ENCODE measurements at regions of chr1 and their contacts with region 1.

Region 1: DNA sequence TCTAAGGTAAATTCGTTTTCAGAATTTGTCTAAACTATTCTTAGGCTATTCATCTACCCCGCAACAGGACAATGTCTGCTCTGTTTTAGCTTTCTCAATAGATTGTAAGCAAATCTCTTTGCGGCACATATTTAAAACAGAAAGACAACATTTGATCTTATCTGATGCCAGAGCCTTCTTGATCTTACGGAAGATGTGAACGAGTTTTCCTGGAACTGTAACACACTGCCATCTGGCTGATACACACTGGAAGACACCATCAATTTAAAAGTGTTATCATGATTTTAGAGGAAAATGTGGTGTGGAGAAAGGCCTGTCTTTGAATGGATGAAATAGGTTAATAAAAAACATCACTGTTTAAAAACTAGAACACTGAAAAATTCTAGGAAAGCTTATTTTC is 36.1 kb downstream of the COA6 start:
- DNase-seq: peak; percentile 47
- H3K4me3 Mint-ChIP-seq: peak overlapping the region; percentile 61
- H3K27ac Mint-ChIP-seq: peak overlapping the region; percentile 95
- H3K4me1 Mint-ChIP-seq: peaks cover 42% of the 10 kb centered on the region
- H3K27me3 Mint-ChIP-seq: no peaks in the 10 kb centered on the region

Region 2: DNA sequence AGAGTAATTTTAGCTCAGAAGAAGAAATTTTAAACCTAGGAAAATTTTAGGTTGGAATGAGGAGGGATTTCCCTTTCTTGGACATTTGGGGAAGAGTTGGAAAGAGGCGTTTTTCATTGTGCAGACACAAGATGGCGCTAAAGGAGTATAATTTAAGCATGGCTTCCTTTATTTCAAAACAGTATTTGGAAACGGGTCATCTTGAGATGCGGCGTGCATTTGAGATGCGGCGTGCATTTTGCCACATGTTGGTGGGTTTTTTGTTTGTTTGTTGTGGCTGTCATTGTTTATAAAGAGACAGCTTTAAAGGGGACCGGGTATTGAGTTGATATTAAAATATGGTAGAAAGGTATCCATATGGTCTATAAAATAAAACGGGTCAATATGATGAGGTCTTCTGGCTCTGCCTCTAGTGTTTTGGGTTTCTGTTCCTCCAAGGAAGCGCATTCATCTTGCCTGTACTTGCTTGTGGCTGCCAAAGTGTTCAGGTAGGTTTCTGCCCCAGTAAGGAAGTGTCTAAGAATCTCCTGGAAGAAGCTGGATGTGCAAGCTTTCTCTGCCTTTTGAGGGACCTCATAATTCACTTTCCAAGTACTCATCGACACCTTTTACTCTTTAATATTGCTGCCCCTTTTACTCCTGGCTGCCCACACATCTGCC is 294.6 kb before region 1 on chr1:
- CTCF ChIA-PET with region 1: no interaction called
- intact Hi-C with region 1: loop called (anchors 1 kb)
- DNase-seq: peak; percentile 43
- H3K4me3 Mint-ChIP-seq: peak overlapping the region; percentile 41
- H3K27ac Mint-ChIP-seq: no peak overlapping the region
- H3K4me1 Mint-ChIP-seq: peaks cover 6% of the 10 kb centered on the region
- H3K27me3 Mint-ChIP-seq: peaks cover 27% of the 10 kb centered on the region

Region 3: GRCh38 chr1:234271243-234271606 is 138.1 kb before region 1 on chr1:
- CTCF ChIA-PET with region 1: no interaction called
- intact Hi-C with region 1: loop called (anchors 2 kb)
- DNase-seq: peak; percentile 22
- H3K4me3 Mint-ChIP-seq: no peak overlapping the region
- H3K27ac Mint-ChIP-seq: no peak overlapping the region
- H3K4me1 Mint-ChIP-seq: peaks cover 26% of the 10 kb centered on the region
- H3K27me3 Mint-ChIP-seq: peaks cover 28% of the 10 kb centered on the region

Region 4: GRCh38 chr1:234373064-234373958 is 36.0 kb before region 1 on chr1 and contains the start of gene COA6:
- CTCF ChIA-PET with region 1: interaction called, 10 read pairs
- intact Hi-C with region 1: loop called (anchors 1 kb)
- DNase-seq: peak; percentile 90
- H3K4me3 Mint-ChIP-seq: peak within 1 kb of the TSS; percentile 96
- H3K27ac Mint-ChIP-seq: peak within 1 kb of the TSS; percentile 98
- H3K4me1 Mint-ChIP-seq: peaks cover 54% of the 10 kb centered on the region
- H3K27me3 Mint-ChIP-seq: no peaks in the 10 kb centered on the region
- total RNA-seq, gene COA6: 45.8 to 50.2 TPM

Region 5: DNA sequence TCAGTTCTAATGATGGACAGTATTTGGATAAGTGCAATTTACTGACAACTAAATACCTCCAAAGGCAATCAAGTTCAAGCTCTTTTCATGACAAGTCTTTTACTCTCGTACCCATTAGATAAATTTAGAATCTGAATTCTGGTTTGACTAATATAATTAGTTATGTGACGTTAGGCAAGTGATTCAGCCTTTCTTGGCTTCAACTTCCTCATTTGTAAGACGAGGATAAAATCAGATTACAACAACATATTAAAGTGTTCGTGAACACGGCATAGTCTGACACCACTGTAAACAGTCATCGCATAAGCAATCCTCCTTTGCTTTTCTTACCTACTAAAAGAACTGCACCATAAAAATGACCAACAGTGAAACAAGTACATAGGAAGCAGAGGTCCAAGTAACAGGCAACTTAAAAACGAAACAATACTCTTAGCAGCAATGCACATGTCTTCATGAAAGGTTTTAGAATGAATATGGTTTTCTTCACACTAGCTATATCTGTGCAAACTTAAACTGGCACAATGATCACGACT is 10.4 kb before region 1 on chr1:
- CTCF ChIA-PET with region 1: interaction called, 6 read pairs
- intact Hi-C with region 1: loop called (anchors 1 kb)
- DNase-seq: peak; percentile 23
- H3K4me3 Mint-ChIP-seq: peak overlapping the region; percentile 60
- H3K27ac Mint-ChIP-seq: peak overlapping the region; percentile 91
- H3K4me1 Mint-ChIP-seq: peaks cover 58% of the 10 kb centered on the region
- H3K27me3 Mint-ChIP-seq: no peaks in the 10 kb centered on the region

Region 6: DNA sequence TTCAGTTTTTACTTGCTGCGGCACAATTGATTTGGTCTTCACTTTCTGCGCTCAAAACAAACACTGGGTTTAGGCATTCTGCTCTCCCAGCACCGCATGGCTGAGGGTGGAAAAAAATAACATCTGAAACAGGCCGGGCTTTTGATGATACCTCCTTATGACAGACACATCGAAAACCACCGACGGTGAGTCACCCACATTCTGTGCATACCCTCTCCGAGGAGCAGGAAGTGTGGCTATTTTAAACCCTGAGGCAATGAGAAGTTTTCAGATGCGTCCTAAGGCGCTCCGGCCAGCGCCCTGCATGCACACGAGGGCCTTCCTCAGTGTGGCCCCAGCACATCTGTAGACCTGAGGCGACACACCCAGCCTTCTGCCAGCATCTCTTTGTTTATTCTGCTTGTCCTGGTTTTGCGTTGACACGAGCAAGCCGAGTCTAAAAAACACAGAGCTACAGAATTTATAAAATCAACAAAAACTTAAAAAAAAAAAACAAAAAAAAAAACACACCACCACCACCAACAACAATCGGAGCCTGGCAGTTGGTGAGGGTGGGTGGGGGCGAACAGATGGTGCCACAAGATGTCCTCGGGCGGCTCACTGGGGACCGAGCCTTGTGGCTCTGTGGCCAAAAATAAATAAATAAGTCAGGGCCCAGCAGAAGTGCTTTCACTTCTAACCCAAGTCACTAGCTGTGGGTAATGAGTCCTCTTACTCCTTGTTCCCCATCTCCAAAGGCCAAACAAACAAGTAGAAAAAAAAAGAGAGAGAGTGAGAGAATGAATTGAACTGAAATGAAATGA is 363.2 kb after region 1 on chr1:
- CTCF ChIA-PET with region 1: no interaction called
- intact Hi-C with region 1: loop called (anchors 5 kb)
- DNase-seq: peak; percentile 97
- H3K4me3 Mint-ChIP-seq: peak overlapping the region; percentile 61
- H3K27ac Mint-ChIP-seq: peak overlapping the region; percentile 92
- H3K4me1 Mint-ChIP-seq: peaks cover 59% of the 10 kb centered on the region
- H3K27me3 Mint-ChIP-seq: no peaks in the 10 kb centered on the region

Measured in activated naive CD4-positive, alpha-beta T cell treated with anti-CD3 and anti-CD28 coated beads for 36 hours (primary cell).